ENCODE measurements at regions of chr7 and their contacts with region 1.

Region 1: GRCh38 chr7:106064771-106065585 is 47.1 kb downstream of the SYPL1 start:
- DNase-seq: peak; percentile 90
- H3K4me3 ChIP-seq: peak overlapping the region in 1 of 2 donors; percentile 7
- H3K27ac ChIP-seq: peak overlapping the region; percentile 53 to 61
- H3K4me1 ChIP-seq: peaks cover 11% of the 10 kb centered on the region
- H3K27me3 ChIP-seq: no peaks in the 10 kb centered on the region
- CTCF ChIP-seq: peak in 2 of 4 experiments; percentile 10 to 20
- POLR2A ChIP-seq: no peak

Region 2: GRCh38 chr7:106112117-106112971 is 47.4 kb after region 1 on chr7 and contains the start of gene SYPL1:
- intact Hi-C with region 1: loop called (anchors 2 kb)
- DNase-seq: peak; percentile 92
- H3K4me3 ChIP-seq: peak within 1 kb of the TSS; percentile 76 to 87
- H3K27ac ChIP-seq: peak within 1 kb of the TSS; percentile 96 to 98
- H3K4me1 ChIP-seq: peaks cover 2% of the 10 kb centered on the region
- H3K27me3 ChIP-seq: no peaks in the 10 kb centered on the region
- CTCF ChIP-seq: peak in 2 of 4 experiments; percentile 23 to 42
- POLR2A ChIP-seq: peak; percentile 63
- total RNA-seq, gene SYPL1: 87.9 to 132 TPM

Region 3: GRCh38 chr7:106461993-106462859 is 397.2 kb after region 1 on chr7:
- intact Hi-C with region 1: loop called (anchors 10 kb)
- DNase-seq: no peak
- H3K4me3 ChIP-seq: no peak overlapping the region
- H3K27ac ChIP-seq: no peak overlapping the region
- H3K4me1 ChIP-seq: no peaks in the 10 kb centered on the region
- H3K27me3 ChIP-seq: no peaks in the 10 kb centered on the region
- CTCF ChIP-seq: peak; percentile 39 to 87 (median 76)
- POLR2A ChIP-seq: no peak